Activated naive CD4-positive, alpha-beta T cell treated with anti-CD3 and anti-CD28 coated beads for 36 hours (primary cell): ENCODE measurements at regions of chr1 and their contacts with region 1.

Region 1: DNA sequence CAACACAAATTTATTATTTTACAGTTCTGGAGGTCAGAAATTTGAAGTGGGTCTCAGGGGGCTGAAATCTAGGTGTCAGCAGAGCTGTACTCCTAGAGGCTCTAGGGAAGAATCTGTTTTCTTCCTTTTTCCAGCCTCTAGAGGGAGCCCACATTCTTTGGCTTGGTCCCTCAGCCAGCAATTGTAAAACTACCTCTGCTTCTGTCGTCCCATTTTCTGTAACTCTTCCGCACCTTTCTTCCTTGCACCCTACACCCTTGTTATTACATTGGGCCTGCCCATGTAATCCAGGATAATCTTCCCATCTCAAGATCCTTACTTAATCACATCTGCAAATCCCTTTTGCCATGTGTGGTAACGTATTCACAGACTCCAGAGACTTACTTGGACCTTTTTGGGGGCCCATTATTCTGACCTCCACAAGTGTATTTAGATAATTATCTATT is 24.8 kb upstream of the THEM4 start:
- DNase-seq: peak; percentile 64
- H3K4me3 Mint-ChIP-seq: no peak overlapping the region
- H3K27ac Mint-ChIP-seq: no peak overlapping the region
- H3K4me1 Mint-ChIP-seq: no peaks in the 10 kb centered on the region
- H3K27me3 Mint-ChIP-seq: peaks cover 3% of the 10 kb centered on the region

Region 2: DNA sequence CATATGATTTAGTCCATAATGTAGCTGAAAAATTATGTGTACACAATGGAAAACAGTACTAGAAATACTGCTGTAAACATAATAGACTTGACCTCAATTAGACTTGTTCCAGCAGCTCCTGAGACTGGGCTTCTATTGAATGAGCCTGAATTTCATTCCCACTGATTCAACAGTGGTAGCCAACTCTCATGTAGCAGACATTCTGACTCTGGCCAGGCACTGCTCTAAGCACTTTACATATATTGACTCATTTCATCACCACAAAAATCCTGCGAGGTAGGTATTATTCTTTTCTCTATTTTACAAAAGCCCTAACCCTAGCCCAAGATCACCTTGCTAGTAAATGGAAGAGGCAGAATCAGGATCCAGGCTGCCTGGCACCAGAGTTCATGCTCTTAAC is 1155.7 kb before region 1 on chr1:
- CTCF ChIA-PET with region 1: no interaction called
- intact Hi-C with region 1: no loop called
- DNase-seq: no peak
- H3K4me3 Mint-ChIP-seq: no peak overlapping the region
- H3K27ac Mint-ChIP-seq: no peak overlapping the region
- H3K4me1 Mint-ChIP-seq: peaks cover 4% of the 10 kb centered on the region
- H3K27me3 Mint-ChIP-seq: no peaks in the 10 kb centered on the region

Region 3: DNA sequence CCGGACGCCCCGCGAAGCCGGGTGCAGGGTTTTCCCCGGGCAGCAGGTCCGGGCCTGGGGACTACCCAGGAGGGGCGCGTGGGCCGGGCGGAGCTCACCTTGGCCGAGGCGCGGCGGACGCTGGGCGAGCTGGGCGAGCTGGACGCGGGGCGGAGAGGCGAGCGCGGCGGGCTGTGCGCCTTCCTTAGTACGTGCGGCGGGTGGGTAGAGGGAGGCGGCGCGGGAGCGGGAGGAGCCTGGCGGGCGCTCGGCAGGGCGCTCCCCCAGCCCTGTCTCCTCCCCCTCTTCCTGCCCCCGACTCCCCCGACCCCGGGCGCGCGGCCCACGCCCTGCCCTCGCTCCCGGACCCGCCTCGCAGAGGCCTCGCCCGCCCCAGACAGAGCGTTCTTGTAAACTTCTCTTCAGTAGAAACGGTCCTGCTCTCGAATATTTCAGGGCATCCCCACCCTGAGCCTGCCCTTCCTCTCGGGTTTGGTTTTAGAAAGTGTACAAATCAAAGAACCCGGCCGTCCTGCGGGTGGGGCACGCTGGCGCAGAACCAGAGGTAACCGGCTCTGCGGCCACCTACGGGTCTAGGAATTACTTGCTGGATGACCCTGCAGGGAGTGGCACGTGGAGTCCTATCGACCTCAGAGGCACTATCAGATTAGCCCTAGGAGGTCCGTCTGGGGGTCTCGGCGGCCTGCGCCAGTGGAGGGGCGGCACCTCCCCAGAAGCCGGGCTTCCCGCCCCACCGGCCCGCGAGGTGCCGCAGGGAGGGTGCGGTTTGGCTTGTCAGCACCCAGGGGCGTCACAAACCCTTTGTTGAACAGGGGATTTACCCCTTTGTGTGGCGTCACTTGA is 59.8 kb after region 1 on chr1 and contains the start of gene S100A10:
- CTCF ChIA-PET with region 1: interaction called, 233 read pairs
- intact Hi-C with region 1: loop called (anchors 1 kb)
- DNase-seq: peak; percentile 73
- H3K4me3 Mint-ChIP-seq: peak within 1 kb of the TSS; percentile 94
- H3K27ac Mint-ChIP-seq: peak within 1 kb of the TSS; percentile 92
- H3K4me1 Mint-ChIP-seq: peaks cover 44% of the 10 kb centered on the region
- H3K27me3 Mint-ChIP-seq: no peaks in the 10 kb centered on the region
- total RNA-seq, gene S100A10: 159 to 170 TPM